ENCODE measurements at regions of chr1 and their contacts with region 1.

Region 1: GRCh38 chr1:223189903-223190724 is 47.1 kb upstream of the TLR5 start:
- DNase-seq: peak; percentile 67
- H3K4me3 Mint-ChIP-seq: peak overlapping the region; percentile 17
- H3K27ac Mint-ChIP-seq: peak overlapping the region; percentile 60
- H3K4me1 Mint-ChIP-seq: peaks cover 10% of the 10 kb centered on the region
- H3K27me3 Mint-ChIP-seq: peaks cover 22% of the 10 kb centered on the region

Region 2: DNA sequence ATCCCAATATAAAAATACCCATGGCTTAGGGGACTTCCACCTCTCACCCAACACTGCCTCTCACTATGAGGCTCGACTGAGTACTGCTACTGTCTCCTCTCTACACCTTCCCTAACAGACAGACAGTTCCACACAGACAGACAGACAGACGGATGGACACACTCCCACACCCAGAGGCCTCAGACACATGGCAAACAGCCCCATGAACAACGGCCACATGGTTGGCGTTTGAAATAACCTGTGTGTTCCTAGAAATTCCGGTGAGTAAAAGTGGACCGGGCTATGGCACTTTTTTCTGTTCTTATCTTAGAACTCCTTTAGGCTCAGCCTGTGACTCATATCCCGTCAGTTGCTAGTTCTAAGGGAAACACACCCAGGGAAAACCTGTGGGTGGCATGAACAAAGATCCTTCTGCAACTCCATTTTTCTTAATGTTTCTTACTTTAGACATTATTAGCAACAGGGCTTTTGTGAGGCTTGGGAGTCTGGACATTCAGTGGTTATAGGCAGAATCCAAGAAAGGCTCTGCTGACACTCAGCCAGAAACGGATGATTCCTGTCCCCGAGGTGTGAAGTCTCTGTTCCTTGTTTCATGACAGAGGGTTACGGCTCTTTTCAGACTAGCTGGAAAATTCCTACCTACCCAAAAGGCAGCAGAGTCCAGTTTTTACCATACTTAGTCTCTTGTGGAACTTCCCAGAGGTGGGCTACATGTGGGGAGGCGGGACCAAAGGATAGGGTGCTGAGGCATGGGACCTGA is 43.5 kb after region 1 on chr1:
- intact Hi-C with region 1: loop called (anchors 1 kb)
- DNase-seq: no peak
- H3K4me3 Mint-ChIP-seq: peak overlapping the region; percentile 4
- H3K27ac Mint-ChIP-seq: peak overlapping the region; percentile 26
- H3K4me1 Mint-ChIP-seq: peaks cover 13% of the 10 kb centered on the region
- H3K27me3 Mint-ChIP-seq: peaks cover 1% of the 10 kb centered on the region

Region 3: DNA sequence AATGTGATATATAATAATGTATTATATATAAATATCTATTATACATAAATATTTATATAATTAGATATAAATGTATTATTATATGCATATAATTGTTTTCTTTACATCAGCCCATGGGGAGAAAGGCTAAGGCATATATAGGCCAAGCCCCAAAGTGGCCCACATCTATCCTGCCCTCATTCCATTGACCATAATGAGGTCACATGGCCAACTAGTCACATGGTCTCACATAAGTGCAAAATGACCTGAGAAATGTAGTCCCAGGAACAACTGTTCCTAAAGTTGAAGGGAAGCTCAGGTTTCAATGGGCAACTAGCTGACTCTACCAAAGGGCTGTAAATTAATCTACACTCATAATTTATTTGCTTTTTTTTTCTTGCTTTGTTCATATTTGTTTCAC is 188.6 kb after region 1 on chr1:
- intact Hi-C with region 1: no loop called
- DNase-seq: no peak
- H3K4me3 Mint-ChIP-seq: no peak overlapping the region
- H3K27ac Mint-ChIP-seq: no peak overlapping the region
- H3K4me1 Mint-ChIP-seq: no peaks in the 10 kb centered on the region
- H3K27me3 Mint-ChIP-seq: no peaks in the 10 kb centered on the region

Measured in activated CD4-positive, alpha-beta T cell treated with anti-CD3 and anti-CD28 coated beads, Interleukin-2, amount 10 ng/mL, durations not matched to agents 24 days and 14 days (primary cell).